CD4-positive, alpha-beta memory T cell (primary cell): ENCODE measurements at regions of chr11 and their contacts with region 1.

Region 1: DNA sequence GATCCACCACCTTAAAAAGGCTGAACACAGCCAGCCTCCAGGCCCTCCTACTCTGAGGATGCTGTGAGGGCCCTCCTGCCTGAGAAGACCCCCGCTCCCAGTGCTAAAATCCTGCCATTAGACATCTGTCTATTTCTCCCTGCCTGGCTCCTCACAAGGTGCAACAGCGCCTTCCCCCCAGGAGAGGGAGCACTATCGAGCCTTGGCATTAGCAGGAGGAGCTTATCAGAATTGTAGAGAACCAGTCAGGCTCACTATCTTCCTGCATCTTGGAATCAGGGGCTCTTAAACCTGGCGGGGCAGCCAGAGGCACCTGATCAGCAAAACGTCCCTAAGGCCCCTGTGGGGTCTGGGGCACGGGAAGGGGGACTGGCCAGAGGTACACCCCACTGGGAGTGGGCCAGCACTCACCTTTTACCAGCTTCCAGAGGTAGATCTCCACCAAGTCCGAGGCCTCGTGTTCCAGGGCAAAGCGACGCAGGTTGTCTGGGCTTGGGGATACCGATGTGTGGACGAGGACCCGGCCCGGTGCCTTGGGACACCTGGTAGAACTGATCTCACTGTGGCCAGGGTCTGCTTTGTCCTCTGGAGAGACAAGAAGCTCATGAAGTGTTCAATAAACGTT is 28.7 kb downstream of the CHRDL2 start:
- DNase-seq: peak; percentile 35 to 66 (median 46)
- H3K4me3 ChIP-seq: no peak overlapping the region
- H3K4me3 Mint-ChIP-seq: no peak overlapping the region
- H3K27ac ChIP-seq: no peak overlapping the region
- H3K27ac Mint-ChIP-seq: peak overlapping the region in 2 of 7 donors; percentile 9 to 24
- H3K4me1 ChIP-seq: no peaks in the 10 kb centered on the region
- H3K4me1 Mint-ChIP-seq: peaks cover 0 to 3% (median under 1%) of the 10 kb centered on the region in 4 donors
- H3K27me3 ChIP-seq: no peaks in the 10 kb centered on the region
- H3K27me3 Mint-ChIP-seq: peaks cover 2 to 4% of the 10 kb centered on the region in 2 donors

Region 2: GRCh38 chr11:74570266-74571061 is 132.0 kb before region 1 on chr11:
- CTCF ChIA-PET with region 1: no interaction called
- POLR2A ChIA-PET with region 1: no interaction called
- intact Hi-C with region 1: no loop called
- DNase-seq: peak in 2 of 5 donors; percentile 7 to 9
- H3K4me3 ChIP-seq: no peak overlapping the region
- H3K4me3 Mint-ChIP-seq: no peak overlapping the region
- H3K27ac ChIP-seq: no peak overlapping the region
- H3K27ac Mint-ChIP-seq: peak overlapping the region in 2 of 7 donors; percentile 14 to 48
- H3K4me1 ChIP-seq: no peaks in the 10 kb centered on the region
- H3K4me1 Mint-ChIP-seq: no peaks in the 10 kb centered on the region
- H3K27me3 ChIP-seq: no peaks in the 10 kb centered on the region
- H3K27me3 Mint-ChIP-seq: peaks cover 3 to 4% of the 10 kb centered on the region in 2 donors

Region 3: DNA sequence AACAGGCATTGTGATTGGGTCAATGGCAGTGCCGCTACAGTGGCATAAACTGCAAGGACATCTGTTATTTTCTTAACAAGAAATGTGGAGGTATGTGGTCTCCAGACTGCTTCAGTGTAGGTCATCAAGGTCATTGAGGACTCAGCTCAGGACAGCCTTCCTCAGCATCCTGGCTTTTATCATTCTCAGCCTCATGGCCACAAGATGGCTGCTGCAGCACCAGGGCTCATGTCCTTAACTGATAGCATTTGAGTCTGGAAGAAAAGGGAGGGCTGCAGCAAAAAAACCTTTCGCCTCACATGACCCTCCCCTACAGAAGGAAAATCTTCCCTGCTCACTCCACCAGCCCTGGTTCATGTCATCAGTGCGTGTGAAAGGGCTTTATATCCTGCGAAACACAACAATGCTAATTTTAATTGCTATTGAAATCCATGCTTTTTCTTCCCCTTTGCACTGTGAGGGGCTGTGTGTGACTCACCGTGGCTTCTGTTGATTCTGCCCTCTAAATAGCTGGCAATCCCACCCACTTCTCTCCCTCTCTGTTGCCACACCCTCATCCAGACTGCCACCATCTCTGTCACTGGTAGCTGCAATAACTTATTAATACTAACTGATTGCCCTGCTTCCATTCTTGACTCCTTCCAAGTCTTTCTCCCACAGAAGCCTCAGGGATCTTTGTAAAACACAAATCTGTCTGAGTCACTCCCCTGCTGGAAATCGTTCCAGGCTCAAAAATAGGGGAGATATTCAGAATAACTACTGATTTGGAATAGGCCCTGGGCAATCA is 15.1 kb before region 1 on chr11:
- CTCF ChIA-PET with region 1: interaction called, 14 read pairs
- POLR2A ChIA-PET with region 1: no interaction called
- intact Hi-C with region 1: no loop called
- DNase-seq: no peak
- H3K4me3 ChIP-seq: no peak overlapping the region
- H3K4me3 Mint-ChIP-seq: no peak overlapping the region
- H3K27ac ChIP-seq: no peak overlapping the region
- H3K27ac Mint-ChIP-seq: no peak overlapping the region
- H3K4me1 ChIP-seq: no peaks in the 10 kb centered on the region
- H3K4me1 Mint-ChIP-seq: peaks cover 0 to 2% (median 0%) of the 10 kb centered on the region in 4 donors
- H3K27me3 ChIP-seq: peaks cover 5% of the 10 kb centered on the region
- H3K27me3 Mint-ChIP-seq: peaks cover 7 to 11% of the 10 kb centered on the region in 2 donors

Region 4: GRCh38 chr11:74726547-74727182 is 24.2 kb after region 1 on chr11:
- CTCF ChIA-PET with region 1: interaction called, 59 read pairs
- POLR2A ChIA-PET with region 1: no interaction called
- intact Hi-C with region 1: no loop called
- DNase-seq: peak; percentile 37 to 54 (median 52)
- H3K4me3 ChIP-seq: no peak overlapping the region
- H3K4me3 Mint-ChIP-seq: no peak overlapping the region
- H3K27ac ChIP-seq: no peak overlapping the region
- H3K27ac Mint-ChIP-seq: no peak overlapping the region
- H3K4me1 ChIP-seq: peaks cover 7% of the 10 kb centered on the region
- H3K4me1 Mint-ChIP-seq: peaks cover 3 to 12% (median 8%) of the 10 kb centered on the region in 4 donors
- H3K27me3 ChIP-seq: no peaks in the 10 kb centered on the region
- H3K27me3 Mint-ChIP-seq: peaks cover 14 to 23% of the 10 kb centered on the region in 2 donors

Region 5: DNA sequence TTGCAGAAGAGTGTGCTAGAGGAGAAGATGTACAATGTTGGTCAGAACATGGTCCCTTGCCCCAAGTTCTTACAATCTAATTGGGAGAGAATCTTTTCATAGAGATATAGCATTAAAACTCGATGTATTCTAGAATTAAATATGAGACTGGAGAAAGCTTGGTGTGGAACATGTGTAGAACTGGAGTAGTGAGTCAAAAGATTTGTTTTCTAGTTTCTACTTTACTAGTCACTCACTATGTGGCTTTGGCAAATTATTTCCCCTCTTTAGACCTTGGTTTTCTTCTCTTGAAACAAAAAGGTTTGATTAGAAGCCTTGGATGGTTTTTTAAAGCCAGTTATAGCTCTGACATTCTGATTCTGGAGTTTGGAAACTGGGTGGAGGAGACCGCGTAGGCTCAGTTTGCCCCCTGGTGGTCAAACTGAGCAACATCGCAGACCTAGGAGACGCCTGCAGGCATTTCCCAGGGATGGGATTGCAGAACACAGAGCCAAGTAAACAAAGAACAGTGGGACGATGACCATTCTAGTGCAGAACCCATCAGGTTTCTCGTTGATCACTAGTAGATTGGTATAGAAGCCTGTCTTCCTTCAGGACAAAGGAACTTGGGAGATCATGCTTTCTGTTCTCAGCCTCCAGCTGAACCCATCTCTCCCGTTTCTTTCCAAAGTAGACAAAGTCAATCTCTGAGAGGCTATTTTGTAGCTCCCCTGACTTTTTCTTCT is 37.2 kb after region 1 on chr11:
- CTCF ChIA-PET with region 1: interaction called, 21 read pairs
- POLR2A ChIA-PET with region 1: no interaction called
- intact Hi-C with region 1: no loop called
- DNase-seq: peak in 4 of 5 donors; percentile 38 to 43 (median 42)
- H3K4me3 ChIP-seq: no peak overlapping the region
- H3K4me3 Mint-ChIP-seq: no peak overlapping the region
- H3K27ac ChIP-seq: no peak overlapping the region
- H3K27ac Mint-ChIP-seq: peak overlapping the region in 1 of 7 donors; percentile 9
- H3K4me1 ChIP-seq: peaks cover 5% of the 10 kb centered on the region
- H3K4me1 Mint-ChIP-seq: peaks cover 2 to 11% (median 7%) of the 10 kb centered on the region in 4 donors
- H3K27me3 ChIP-seq: no peaks in the 10 kb centered on the region
- H3K27me3 Mint-ChIP-seq: peaks cover 14 to 15% of the 10 kb centered on the region in 2 donors

Region 6: GRCh38 chr11:74870485-74870884 is 168.0 kb after region 1 on chr11:
- CTCF ChIA-PET with region 1: interaction called, 15 read pairs
- POLR2A ChIA-PET with region 1: no interaction called
- intact Hi-C with region 1: no loop called
- DNase-seq: no peak
- H3K4me3 ChIP-seq: no peak overlapping the region
- H3K4me3 Mint-ChIP-seq: no peak overlapping the region
- H3K27ac ChIP-seq: no peak overlapping the region
- H3K27ac Mint-ChIP-seq: no peak overlapping the region
- H3K4me1 ChIP-seq: no peaks in the 10 kb centered on the region
- H3K4me1 Mint-ChIP-seq: peaks cover 0 to 2% (median 0%) of the 10 kb centered on the region in 4 donors
- H3K27me3 ChIP-seq: no peaks in the 10 kb centered on the region
- H3K27me3 Mint-ChIP-seq: no peaks in the 10 kb centered on the region